KBM-7 (cell line): ENCODE measurements at regions of chrX and their contacts with region 1.

Region 1: DNA sequence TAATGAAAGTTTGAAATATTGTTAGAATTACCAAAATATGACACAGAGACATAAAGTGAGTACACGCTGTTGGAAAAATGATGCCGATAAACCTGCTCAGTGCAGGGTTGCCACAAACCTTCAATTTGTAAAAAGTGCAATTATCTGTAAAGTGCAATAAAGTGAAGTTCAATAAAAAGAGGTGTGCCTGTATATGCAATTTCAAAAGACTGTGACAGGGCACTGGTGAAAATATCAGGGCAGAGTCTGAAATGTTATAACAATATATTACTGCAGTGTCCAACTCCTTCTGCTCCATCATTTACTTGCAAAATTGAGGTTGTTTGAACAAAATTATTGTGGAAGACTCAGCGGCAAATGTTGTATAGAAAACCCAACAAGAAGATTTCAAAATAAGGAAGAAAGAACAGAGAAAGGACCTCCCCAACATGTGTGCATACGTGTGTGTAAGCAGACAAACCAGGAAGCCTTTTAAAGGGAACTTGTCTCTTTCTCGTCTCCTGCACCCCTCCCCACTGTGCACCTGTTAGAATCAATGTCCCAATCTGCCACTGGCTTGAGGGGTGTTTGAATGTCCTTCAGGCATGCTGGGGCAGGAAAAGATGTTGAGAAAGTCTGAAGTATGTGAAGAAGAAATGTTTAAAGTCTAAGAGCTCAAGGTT is 96.2 kb downstream of the MAOB start:
- DNase-seq: no peak

Region 2: DNA sequence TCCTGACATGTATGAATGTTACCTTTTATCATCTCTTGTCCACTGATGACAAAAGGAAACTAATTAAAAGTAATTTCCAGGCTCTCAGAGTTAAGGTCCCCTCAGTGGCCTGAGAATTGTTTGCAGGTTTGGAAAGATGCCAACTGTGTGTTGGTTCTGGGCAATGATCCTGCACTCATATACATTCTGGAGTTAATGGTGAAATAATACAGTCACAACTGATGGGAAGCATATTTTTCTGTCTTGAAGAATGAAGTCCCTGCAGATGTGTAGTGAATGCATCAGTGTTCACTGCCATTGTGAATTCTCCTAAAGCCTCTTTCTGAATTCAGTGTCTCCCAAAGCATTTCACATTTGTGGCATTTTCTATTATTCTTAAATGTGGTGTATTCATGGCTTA is 770.0 kb before region 1 on chrX:
- in situ Hi-C with region 1: no loop called
- DNase-seq: no peak

Region 3: GRCh38 chrX:43882299-43882694 is 96.2 kb after region 1 on chrX and contains the start of gene MAOB:
- in situ Hi-C with region 1: loop called (anchors 25 kb)
- DNase-seq: no peak

Region 4: GRCh38 chrX:44017676-44018075 is 231.6 kb after region 1 on chrX:
- in situ Hi-C with region 1: no loop called
- DNase-seq: no peak